ENCODE measurements at regions of chr3 and their contacts with region 1.

Region 1: DNA sequence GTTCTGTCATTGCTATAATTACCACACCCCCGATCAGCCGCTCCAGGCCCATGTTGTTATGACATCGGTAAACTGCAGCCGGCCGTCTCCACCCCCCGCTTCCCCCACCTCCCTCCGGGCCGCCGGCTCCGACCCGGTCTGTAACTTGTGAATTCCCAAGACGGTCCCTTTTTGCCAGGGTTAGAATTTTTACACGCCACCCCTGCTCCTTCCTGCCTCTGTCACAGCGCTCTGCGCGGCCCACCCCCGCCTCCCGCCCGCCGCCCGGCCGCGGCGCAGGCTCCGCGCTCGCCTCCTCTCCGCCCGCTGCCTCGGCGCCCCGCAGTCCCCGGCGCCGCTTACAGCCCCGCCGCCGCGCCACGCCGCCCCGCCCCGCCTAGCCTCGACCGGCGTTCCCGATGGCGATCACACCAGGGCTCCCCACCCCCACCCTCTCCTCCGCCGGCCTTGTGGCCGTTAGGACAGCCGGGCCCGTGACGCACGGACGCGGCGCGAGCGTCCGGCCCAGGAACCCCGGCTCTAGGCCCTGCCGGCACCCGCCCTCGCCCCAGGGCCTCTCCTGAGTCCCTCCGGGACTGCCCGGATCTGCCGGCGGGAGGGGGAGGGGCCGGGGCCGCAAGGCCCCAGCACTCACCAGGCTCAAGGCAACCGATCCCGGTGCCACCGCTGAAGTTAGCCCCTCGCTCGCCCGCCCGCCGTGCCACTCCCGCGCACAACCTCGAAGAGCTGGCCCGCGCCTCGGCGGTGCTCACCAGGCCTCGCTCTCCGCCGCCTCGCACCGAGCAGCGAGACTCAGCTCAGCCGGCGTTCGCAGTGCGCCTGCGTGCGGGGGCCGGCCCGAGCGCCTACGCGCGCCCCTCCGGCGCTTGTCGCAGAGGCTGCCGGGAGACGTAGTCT is at the start of gene KPNA1:
- DNase-seq: peak; percentile 74 to 95 (median 85)
- ATAC-seq: peak; percentile 86
- H3K4me3 ChIP-seq: peak within 1 kb of the TSS; percentile 67 to 74
- H3K4me3 Mint-ChIP-seq: peak within 1 kb of the TSS; percentile 74
- H3K27ac ChIP-seq: peak within 1 kb of the TSS; percentile 88 to 89
- H3K27ac Mint-ChIP-seq: peak within 1 kb of the TSS; percentile 89
- H3K4me1 ChIP-seq: peaks cover 18% of the 10 kb centered on the region
- H3K4me1 Mint-ChIP-seq: peaks cover 42% of the 10 kb centered on the region
- H3K27me3 ChIP-seq: no peaks in the 10 kb centered on the region
- H3K27me3 Mint-ChIP-seq: no peaks in the 10 kb centered on the region
- CTCF ChIP-seq: no peak
- total RNA-seq, gene KPNA1: 39.3 to 45.0 TPM

Region 2: GRCh38 chr3:121749276-121750086 is 764.9 kb before region 1 on chr3 and contains the start of gene GOLGB1:
- CTCF ChIA-PET with region 1: no interaction called
- POLR2A ChIA-PET with region 1: no interaction called
- intact Hi-C with region 1: loop called in 1 of 2 experiments (anchors 5 kb)
- DNase-seq: peak; percentile 74 to 99 (median 90)
- ATAC-seq: peak; percentile 94
- H3K4me3 ChIP-seq: peak within 1 kb of the TSS; percentile 86 to 94
- H3K4me3 Mint-ChIP-seq: no peak within 1 kb of the TSS
- H3K27ac ChIP-seq: peak within 1 kb of the TSS; percentile 97 to 98
- H3K27ac Mint-ChIP-seq: no peak within 1 kb of the TSS
- H3K4me1 ChIP-seq: peaks cover 19% of the 10 kb centered on the region
- H3K4me1 Mint-ChIP-seq: peaks cover 14% of the 10 kb centered on the region
- H3K27me3 ChIP-seq: peaks cover 0 to 6% of the 10 kb centered on the region in 2 experiments
- H3K27me3 Mint-ChIP-seq: peaks cover 4% of the 10 kb centered on the region
- CTCF ChIP-seq: no peak
- total RNA-seq, gene GOLGB1: 47.4 to 53.9 TPM

Region 3: GRCh38 chr3:122415720-122416654 is 98.4 kb before region 1 on chr3 and contains the start of gene WDR5B:
- CTCF ChIA-PET with region 1: interaction called, 5 read pairs
- POLR2A ChIA-PET with region 1: interaction called, 9 read pairs
- intact Hi-C with region 1: loop called (anchors 1 kb)
- DNase-seq: peak; percentile 97 to 99 (median 98)
- ATAC-seq: peak; percentile 88
- H3K4me3 ChIP-seq: peak within 1 kb of the TSS; percentile 71 to 76
- H3K4me3 Mint-ChIP-seq: peak within 1 kb of the TSS; percentile 97
- H3K27ac ChIP-seq: peak within 1 kb of the TSS; percentile 91 to 94
- H3K27ac Mint-ChIP-seq: peak within 1 kb of the TSS; percentile 100
- H3K4me1 ChIP-seq: peaks cover 26% of the 10 kb centered on the region
- H3K4me1 Mint-ChIP-seq: peaks cover 58% of the 10 kb centered on the region
- H3K27me3 ChIP-seq: no peaks in the 10 kb centered on the region
- H3K27me3 Mint-ChIP-seq: no peaks in the 10 kb centered on the region
- CTCF ChIP-seq: no peak
- total RNA-seq, gene WDR5B: 1.9 to 2.7 TPM

Region 4: DNA sequence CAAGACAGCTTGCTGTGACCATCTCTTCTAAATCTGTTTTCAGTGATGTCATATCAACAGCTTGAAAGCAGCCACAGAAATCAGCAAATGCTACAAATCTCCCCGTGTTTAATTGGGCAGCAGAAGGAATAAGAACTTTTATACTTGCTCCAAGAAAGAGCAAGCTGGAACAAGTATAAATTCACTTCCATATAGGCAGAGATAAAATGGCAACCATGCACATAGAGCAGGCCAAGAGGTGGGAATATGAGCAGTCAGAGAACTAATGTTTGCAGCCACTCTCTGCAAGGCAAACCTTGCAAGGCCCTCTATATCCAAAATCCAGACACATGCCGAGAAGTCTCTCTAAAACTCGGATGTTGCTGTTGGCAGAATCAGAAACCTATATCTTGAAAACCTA is 33.7 kb after region 1 on chr3:
- CTCF ChIA-PET with region 1: interaction called, 3 read pairs
- POLR2A ChIA-PET with region 1: interaction called, 11 read pairs
- intact Hi-C with region 1: no loop called
- DNase-seq: no peak
- ATAC-seq: no peak
- H3K4me3 ChIP-seq: no peak overlapping the region
- H3K4me3 Mint-ChIP-seq: no peak overlapping the region
- H3K27ac ChIP-seq: no peak overlapping the region
- H3K27ac Mint-ChIP-seq: no peak overlapping the region
- H3K4me1 ChIP-seq: no peaks in the 10 kb centered on the region
- H3K4me1 Mint-ChIP-seq: peaks cover under 1% of the 10 kb centered on the region
- H3K27me3 ChIP-seq: no peaks in the 10 kb centered on the region
- H3K27me3 Mint-ChIP-seq: no peaks in the 10 kb centered on the region
- CTCF ChIP-seq: no peak

Region 5: DNA sequence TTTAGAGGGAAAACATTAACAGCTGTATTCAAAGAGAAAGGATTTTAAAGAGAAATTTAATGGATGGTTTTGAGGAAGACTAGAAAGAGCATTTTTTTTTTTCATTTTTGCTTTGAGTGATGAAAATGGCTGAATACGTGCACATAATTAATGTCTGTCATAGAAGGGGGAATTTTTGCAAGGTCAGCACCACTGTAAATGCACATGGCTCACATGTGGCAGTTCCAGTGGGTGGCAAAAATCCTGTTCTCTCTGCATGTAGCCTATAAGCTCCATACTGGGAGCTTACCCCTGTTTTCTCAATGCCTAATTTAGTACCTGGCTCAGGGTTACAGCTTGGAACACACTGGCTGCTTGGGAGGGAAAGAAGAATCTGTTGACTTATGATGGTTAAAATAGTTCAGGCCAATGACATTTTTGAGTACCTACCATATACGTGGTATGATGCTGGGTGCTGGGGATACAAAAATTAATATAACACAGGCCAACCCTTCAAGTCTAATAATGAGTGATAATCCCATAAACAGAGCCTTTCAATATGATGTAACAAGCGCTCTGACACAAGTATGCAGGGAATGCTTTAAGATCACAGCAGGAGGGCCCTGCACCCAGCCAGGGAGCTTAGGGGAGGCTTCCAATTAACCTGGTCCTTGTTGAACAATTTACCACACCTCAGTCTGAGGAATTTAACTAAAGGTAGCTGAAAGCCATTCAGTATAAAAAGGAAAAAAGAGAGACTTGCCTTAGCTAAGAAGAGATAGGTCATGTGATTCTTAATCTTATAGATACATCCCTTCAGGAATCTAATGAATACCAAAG is 246.3 kb after region 1 on chr3:
- CTCF ChIA-PET with region 1: no interaction called
- POLR2A ChIA-PET with region 1: no interaction called
- intact Hi-C with region 1: no loop called
- DNase-seq: no peak
- ATAC-seq: no peak
- H3K4me3 ChIP-seq: no peak overlapping the region
- H3K4me3 Mint-ChIP-seq: no peak overlapping the region
- H3K27ac ChIP-seq: no peak overlapping the region
- H3K27ac Mint-ChIP-seq: no peak overlapping the region
- H3K4me1 ChIP-seq: no peaks in the 10 kb centered on the region
- H3K4me1 Mint-ChIP-seq: peaks cover 3% of the 10 kb centered on the region
- H3K27me3 ChIP-seq: no peaks in the 10 kb centered on the region
- H3K27me3 Mint-ChIP-seq: no peaks in the 10 kb centered on the region
- CTCF ChIP-seq: no peak

Region 6: GRCh38 chr3:123201566-123202427 is 687.4 kb after region 1 on chr3 and contains the start of gene SEC22A:
- CTCF ChIA-PET with region 1: no interaction called
- POLR2A ChIA-PET with region 1: no interaction called
- intact Hi-C with region 1: loop called in 1 of 2 experiments (anchors 1 kb)
- DNase-seq: peak; percentile 91 to 99 (median 96)
- ATAC-seq: peak; percentile 96
- H3K4me3 ChIP-seq: peak within 1 kb of the TSS; percentile 82 to 96
- H3K4me3 Mint-ChIP-seq: peak within 1 kb of the TSS; percentile 83
- H3K27ac ChIP-seq: peak within 1 kb of the TSS; percentile 94 to 95
- H3K27ac Mint-ChIP-seq: peak within 1 kb of the TSS; percentile 98
- H3K4me1 ChIP-seq: peaks cover 18% of the 10 kb centered on the region
- H3K4me1 Mint-ChIP-seq: peaks cover 26% of the 10 kb centered on the region
- H3K27me3 ChIP-seq: no peaks in the 10 kb centered on the region
- H3K27me3 Mint-ChIP-seq: no peaks in the 10 kb centered on the region
- CTCF ChIP-seq: no peak
- total RNA-seq, gene SEC22A: 8.6 to 9.1 TPM